ENCODE measurements at regions of chr15 and their contacts with region 1.

Region 1: GRCh38 chr15:62125773-62126172 is 39.3 kb downstream of the C2CD4B start:
- DNase-seq: no peak
- H3K4me3 ChIP-seq: no peak overlapping the region
- CTCF ChIP-seq: peak; percentile 45

Region 2: DNA sequence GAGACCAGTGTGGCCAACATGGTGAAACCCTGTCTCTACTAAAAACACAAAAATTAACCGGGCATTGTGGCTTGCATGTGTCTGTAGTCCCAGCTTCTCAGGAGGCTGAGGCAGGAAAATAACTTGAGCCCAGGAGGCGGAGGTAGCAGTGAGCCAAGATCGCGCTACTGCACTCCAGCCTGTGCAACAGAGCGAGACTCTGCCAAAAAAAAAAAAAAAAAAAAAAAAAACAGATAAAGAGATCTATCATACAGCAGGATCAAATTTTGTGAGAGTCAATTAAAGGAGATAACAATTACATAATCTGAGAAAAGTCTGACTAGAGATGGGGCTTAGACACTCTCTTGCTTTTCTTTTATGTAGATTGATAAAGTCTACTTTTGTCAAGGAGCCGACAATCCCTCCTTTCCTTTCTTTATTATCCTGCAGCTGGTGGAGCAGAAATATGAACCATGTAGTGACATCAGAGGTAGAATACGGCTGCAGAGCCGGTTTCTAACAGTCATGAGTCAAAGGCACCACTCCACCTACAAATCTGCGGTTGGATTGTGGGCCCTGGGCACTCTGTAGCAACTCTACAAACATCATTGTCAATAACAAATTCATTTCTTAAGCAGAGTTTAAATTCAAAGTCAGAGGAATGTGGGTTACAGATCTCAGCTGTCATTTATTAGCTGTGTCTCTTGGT is 50.0 kb before region 1 on chr15:
- CTCF ChIA-PET with region 1: interaction called, 10 read pairs
- POLR2A ChIA-PET with region 1: no interaction called
- DNase-seq: no peak
- H3K4me3 ChIP-seq: no peak overlapping the region
- CTCF ChIP-seq: no peak

Region 3: DNA sequence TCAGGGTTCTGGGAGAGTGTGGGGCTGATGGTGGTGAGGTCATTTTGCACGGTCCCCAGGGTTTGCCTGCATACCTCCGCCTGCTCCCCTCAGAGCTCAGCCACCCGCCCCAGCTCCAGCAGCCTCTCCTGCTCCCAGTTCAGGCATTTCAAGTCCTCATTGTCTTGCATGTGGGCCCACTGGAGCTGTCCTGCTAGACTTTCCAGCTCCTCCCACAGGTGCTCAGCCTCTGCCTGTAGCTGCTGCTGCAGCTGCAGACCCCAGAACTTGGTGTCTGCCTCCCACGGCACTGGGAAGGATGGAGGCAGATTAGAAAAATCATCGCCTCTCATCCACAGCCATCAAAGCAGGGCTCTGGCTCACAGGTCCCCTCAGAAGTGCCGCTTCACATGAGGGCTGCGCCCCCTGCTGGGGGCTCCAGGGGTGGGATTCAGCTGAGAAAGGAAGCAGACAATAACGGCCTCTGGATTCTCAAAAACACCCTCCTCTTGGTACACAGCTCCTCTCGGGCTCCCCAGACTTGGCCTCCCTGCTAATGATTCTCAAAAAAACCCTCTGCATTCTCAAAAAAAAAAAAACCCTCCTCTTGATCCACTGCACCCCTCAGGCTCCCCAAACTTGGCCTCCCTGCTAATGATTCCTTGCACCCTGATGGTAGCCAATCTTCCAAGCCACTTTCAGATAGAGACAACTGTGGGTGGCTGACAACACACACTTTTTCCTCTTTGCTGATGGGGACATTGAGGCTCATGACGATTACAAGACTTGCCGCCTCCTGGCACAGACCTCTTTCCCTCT is 128.6 kb after region 1 on chr15:
- CTCF ChIA-PET with region 1: no interaction called
- POLR2A ChIA-PET with region 1: no interaction called
- DNase-seq: no peak
- H3K4me3 ChIP-seq: no peak overlapping the region
- CTCF ChIP-seq: peak; percentile 84

Measured in AG04449 (cell line).